A673 (cell line): ENCODE measurements at regions of chr1 and their contacts with region 1.

Region 1: GRCh38 chr1:162230096-162230495 is 146.6 kb downstream of the SPATA46 start:
- DNase-seq: peak; percentile 98
- H3K4me3 ChIP-seq: peak overlapping the region; percentile 4
- H3K27ac ChIP-seq: peak overlapping the region; percentile 92
- H3K4me1 ChIP-seq: peaks cover 74% of the 10 kb centered on the region
- H3K27me3 ChIP-seq: no peaks in the 10 kb centered on the region
- CTCF ChIP-seq: peak; percentile 70

Region 2: DNA sequence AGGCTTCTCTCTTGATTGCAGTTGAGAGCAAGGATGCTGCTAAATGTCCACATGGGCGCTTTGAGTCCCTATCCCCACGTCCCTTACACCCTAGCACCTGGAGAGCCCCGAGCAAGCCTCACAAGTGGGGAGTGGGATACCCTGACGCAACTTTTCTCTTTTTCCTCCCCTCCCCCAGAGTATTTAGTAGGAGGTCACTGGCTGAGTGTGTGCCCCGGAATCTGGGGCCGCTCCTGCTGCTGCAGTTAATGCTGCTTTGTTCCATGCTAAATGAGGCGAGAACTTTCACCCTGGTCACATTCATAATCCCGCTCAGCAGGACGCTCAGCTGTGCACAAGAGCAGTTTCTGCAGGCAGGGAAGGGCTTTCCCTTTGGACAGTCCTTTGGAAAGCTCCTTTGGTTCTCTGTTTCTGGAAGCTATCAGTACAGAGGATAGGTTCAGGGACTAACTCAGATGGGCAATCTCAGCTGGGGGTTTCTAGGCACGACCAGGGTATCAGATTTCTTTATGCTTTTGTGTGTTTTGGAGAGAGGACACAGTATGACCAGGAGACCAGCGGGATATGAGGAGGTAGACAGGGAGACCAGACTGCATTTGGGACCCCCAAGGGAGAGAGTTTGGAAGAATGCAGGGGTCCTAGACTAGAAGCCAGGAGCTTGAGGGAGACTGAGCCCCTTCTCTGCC is 84.7 kb before region 1 on chr1:
- CTCF ChIA-PET with region 1: no interaction called
- POLR2A ChIA-PET with region 1: interaction called, 5 read pairs
- intact Hi-C with region 1: loop called (anchors 1 kb)
- DNase-seq: peak; percentile 86
- H3K4me3 ChIP-seq: peak overlapping the region; percentile 17
- H3K27ac ChIP-seq: peak overlapping the region; percentile 95
- H3K4me1 ChIP-seq: peaks cover 68% of the 10 kb centered on the region
- H3K27me3 ChIP-seq: no peaks in the 10 kb centered on the region
- CTCF ChIP-seq: no peak

Region 3: GRCh38 chr1:162168249-162168648 is 61.8 kb before region 1 on chr1:
- CTCF ChIA-PET with region 1: no interaction called
- POLR2A ChIA-PET with region 1: no interaction called
- intact Hi-C with region 1: loop called (anchors 5 kb)
- DNase-seq: no peak
- H3K4me3 ChIP-seq: no peak overlapping the region
- H3K27ac ChIP-seq: peak overlapping the region; percentile 78
- H3K4me1 ChIP-seq: peaks cover 70% of the 10 kb centered on the region
- H3K27me3 ChIP-seq: no peaks in the 10 kb centered on the region
- CTCF ChIP-seq: no peak

Region 4: GRCh38 chr1:162265983-162266382 is 35.9 kb after region 1 on chr1:
- CTCF ChIA-PET with region 1: interaction called, 4 read pairs
- POLR2A ChIA-PET with region 1: interaction called, 12 read pairs
- intact Hi-C with region 1: no loop called
- DNase-seq: no peak
- H3K4me3 ChIP-seq: no peak overlapping the region
- H3K27ac ChIP-seq: no peak overlapping the region
- H3K4me1 ChIP-seq: peaks cover 25% of the 10 kb centered on the region
- H3K27me3 ChIP-seq: no peaks in the 10 kb centered on the region
- CTCF ChIP-seq: no peak